ENCODE measurements at regions of chr9 and their contacts with region 1.

Region 1: GRCh38 chr9:33290247-33291030 is at the start of gene NFX1:
- DNase-seq: peak; percentile 98 to 99 (median 98)
- ATAC-seq: peak; percentile 91 to 96 (median 94)
- H3K4me3 ChIP-seq: peak within 1 kb of the TSS; percentile 56 to 94 (median 78)
- H3K27ac ChIP-seq: peak within 1 kb of the TSS; percentile 94 to 100 (median 98)
- H3K4me1 ChIP-seq: peaks cover 9 to 58% (median 34%) of the 10 kb centered on the region in 12 donors
- H3K27me3 ChIP-seq: no peaks in the 10 kb centered on the region
- CTCF ChIP-seq: no peak
- POLR2A ChIP-seq: peak; percentile 36 to 90
- total RNA-seq, gene NFX1: 25.4 to 42.0 (median 36.1) TPM

Region 2: DNA sequence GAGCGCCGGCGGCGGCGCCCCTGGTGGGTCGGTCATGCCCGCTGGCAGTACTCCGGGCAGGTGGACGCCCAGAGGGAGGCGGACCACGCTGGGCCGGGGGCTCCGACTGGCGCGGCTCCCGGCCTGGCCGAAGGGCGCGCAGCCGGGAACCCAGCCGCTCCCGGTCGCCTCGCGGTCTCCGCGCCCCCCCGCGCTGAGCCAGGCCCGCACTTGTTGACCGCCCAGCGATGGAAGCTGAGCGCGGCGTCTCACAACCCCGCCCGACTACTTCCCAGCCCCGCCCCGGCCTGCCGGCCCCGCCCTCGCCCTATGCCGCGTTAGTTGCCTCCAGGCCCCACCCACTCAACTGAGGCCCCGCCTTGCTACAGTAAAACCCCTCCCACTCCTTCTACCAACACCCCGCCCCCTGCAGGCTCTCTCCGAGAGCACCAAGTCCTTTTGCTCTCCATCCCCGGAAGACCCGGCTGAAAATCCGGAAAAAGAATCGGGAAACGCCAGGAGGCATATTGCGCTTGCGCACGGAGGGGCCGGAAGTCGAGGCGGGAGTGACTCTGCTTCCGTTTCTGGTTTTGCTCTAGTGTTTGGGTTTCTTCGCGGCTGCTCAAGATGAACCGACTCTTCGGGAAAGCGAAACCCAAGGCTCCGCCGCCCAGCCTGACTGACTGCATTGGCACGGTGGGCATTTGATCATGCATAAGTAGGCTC is 25.8 kb before region 1 on chr9 and contains the starts of genes BAG1 and CHMP5:
- intact Hi-C with region 1: loop called in 2 of 10 experiments (anchors 1 kb)
- DNase-seq: peak; percentile 99 to 100 (median 100)
- ATAC-seq: peak; percentile 97 to 99 (median 98)
- H3K4me3 ChIP-seq: peak within 1 kb of the TSS; percentile 66 to 97 (median 91)
- H3K27ac ChIP-seq: peak within 1 kb of the TSS; percentile 76 to 99 (median 94)
- H3K4me1 ChIP-seq: peaks cover 0 to 36% (median 23%) of the 10 kb centered on the region in 12 donors
- H3K27me3 ChIP-seq: no peaks in the 10 kb centered on the region
- CTCF ChIP-seq: peak; percentile 12 to 69 (median 33)
- POLR2A ChIP-seq: peak; percentile 90 to 91
- total RNA-seq, gene BAG1: 71.0 to 144 (median 112) TPM
- total RNA-seq, gene CHMP5: 37.6 to 58.5 (median 53.0) TPM

Region 3: DNA sequence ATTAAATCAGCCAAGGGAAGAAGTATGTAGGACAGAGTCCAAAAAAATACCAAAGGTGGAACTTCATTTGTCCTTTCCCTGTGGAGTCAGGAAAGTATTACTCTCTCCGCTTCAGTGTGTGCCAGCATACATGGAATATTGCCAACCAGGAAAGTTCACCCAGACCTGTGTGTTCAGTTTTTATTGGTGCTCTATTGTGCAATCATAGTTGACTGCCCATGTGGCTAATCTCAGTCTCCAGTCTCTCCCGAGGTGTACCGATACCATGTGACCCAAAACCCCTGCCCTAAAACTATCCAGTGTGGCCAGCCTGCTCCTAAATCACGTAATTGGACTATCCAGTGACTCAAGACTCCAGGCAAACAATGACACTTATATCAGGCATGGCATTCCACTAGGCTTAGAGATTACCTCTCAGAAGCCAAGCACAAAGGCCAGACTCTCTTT is 38.7 kb after region 1 on chr9:
- intact Hi-C with region 1: loop called in 2 of 10 experiments (anchors 1 to 5 kb)
- DNase-seq: peak in 4 of 5 donors; percentile 34 to 73 (median 46)
- ATAC-seq: peak; percentile 92 to 97 (median 94)
- H3K4me3 ChIP-seq: no peak overlapping the region
- H3K27ac ChIP-seq: peak overlapping the region; percentile 12 to 87 (median 72)
- H3K4me1 ChIP-seq: peaks cover 0 to 19% (median 6%) of the 10 kb centered on the region in 12 donors
- H3K27me3 ChIP-seq: no peaks in the 10 kb centered on the region
- CTCF ChIP-seq: no peak
- POLR2A ChIP-seq: no peak

Region 4: DNA sequence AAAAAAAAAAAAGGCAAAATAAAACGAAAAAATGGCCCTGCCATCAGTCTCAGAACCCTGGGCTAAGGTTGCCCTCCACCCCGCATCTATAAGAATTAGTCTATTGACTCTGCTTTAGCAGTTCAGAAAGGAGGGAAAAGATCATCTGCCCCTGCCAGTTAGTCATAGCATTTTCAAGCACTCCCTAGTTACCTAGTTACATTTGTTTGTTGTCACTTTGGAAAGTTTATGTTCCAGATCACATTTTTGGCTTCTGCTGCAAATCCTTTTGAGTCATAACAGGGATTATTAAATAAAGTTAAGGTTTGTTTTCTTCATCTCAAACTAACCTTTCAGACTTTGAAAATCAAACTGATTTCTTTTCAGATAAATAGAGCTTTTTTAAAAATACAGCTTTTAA is 59.9 kb after region 1 on chr9:
- intact Hi-C with region 1: loop called in 1 of 10 experiments (anchors 10 kb)
- DNase-seq: no peak
- ATAC-seq: peak in 3 of 4 donors; percentile 52 to 75 (median 71)
- H3K4me3 ChIP-seq: no peak overlapping the region
- H3K27ac ChIP-seq: peak overlapping the region in 7 of 12 donors; percentile 1 to 76 (median 41)
- H3K4me1 ChIP-seq: peaks cover 0 to 28% (median 11%) of the 10 kb centered on the region in 12 donors
- H3K27me3 ChIP-seq: no peaks in the 10 kb centered on the region
- CTCF ChIP-seq: no peak
- POLR2A ChIP-seq: no peak

Region 5: DNA sequence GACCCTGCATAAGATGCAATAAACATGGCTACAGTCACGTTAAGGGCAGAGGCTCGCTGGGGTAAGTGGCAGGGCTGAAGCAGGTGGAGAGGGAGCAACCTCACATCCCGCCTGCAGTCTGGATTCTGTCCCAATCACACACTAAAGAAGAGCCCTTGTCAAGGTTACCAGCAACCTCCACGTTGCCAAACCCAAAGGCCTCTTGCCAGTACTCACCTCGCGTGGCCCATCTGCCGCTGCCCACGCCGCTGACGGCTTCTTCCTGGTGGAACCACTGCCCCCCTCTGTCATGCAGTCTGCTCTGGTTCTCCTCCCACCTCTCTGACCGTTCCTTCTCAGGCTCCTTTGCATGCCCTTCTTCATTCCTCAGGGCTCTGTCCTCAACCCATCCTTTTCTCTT is 103.1 kb after region 1 on chr9:
- intact Hi-C with region 1: no loop called
- DNase-seq: peak in 3 of 5 donors; percentile 52 to 82 (median 66)
- ATAC-seq: no peak
- H3K4me3 ChIP-seq: peak overlapping the region in 3 of 12 donors; percentile 2 to 17 (median 15)
- H3K27ac ChIP-seq: peak overlapping the region; percentile 78 to 95 (median 90)
- H3K4me1 ChIP-seq: peaks cover 0 to 68% (median 28%) of the 10 kb centered on the region in 12 donors
- H3K27me3 ChIP-seq: no peaks in the 10 kb centered on the region
- CTCF ChIP-seq: no peak
- POLR2A ChIP-seq: no peak

Region 6: DNA sequence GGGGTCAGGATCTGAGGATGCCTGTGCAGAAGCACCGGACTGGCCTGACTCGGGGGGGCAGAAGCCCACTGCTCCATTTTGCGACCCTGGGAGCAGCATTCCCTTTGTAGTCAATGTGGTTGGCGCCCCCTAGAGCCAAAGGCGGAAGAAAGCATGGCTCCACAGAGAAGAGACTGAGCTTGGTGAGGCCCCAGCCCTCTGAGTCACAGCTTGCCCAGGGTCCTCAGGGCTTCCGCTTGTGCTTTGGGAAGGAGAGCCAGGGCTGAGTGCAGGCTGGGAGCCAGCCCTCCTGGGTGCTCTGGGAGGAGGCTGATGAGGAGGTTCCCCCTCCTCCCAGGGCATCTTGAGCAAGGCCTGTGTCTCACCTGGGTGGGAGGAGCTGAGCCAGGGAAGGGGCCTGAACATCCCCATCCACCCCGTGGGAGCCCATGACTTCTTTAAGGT is 162.4 kb after region 1 on chr9:
- intact Hi-C with region 1: loop called in 1 of 10 experiments (anchors 10 kb)
- DNase-seq: peak in 4 of 5 donors; percentile 37 to 72 (median 54)
- ATAC-seq: peak in 3 of 4 donors; percentile 62 to 69 (median 63)
- H3K4me3 ChIP-seq: no peak overlapping the region
- H3K27ac ChIP-seq: no peak overlapping the region
- H3K4me1 ChIP-seq: peaks cover 0 to 10% (median under 1%) of the 10 kb centered on the region in 12 donors
- H3K27me3 ChIP-seq: no peaks in the 10 kb centered on the region
- CTCF ChIP-seq: peak; percentile 38 to 65 (median 58)
- POLR2A ChIP-seq: no peak

Region 7: GRCh38 chr9:33466565-33467495 is 176.4 kb after region 1 on chr9:
- intact Hi-C with region 1: loop called in 3 of 10 experiments (anchors 5 to 10 kb)
- DNase-seq: peak; percentile 50 to 84 (median 57)
- ATAC-seq: peak; percentile 28 to 68 (median 46)
- H3K4me3 ChIP-seq: no peak overlapping the region
- H3K27ac ChIP-seq: no peak overlapping the region
- H3K4me1 ChIP-seq: peaks cover 0 to 6% (median 0%) of the 10 kb centered on the region in 12 donors
- H3K27me3 ChIP-seq: no peaks in the 10 kb centered on the region
- CTCF ChIP-seq: peak; percentile 84 to 95 (median 89)
- POLR2A ChIP-seq: no peak

Region 8: DNA sequence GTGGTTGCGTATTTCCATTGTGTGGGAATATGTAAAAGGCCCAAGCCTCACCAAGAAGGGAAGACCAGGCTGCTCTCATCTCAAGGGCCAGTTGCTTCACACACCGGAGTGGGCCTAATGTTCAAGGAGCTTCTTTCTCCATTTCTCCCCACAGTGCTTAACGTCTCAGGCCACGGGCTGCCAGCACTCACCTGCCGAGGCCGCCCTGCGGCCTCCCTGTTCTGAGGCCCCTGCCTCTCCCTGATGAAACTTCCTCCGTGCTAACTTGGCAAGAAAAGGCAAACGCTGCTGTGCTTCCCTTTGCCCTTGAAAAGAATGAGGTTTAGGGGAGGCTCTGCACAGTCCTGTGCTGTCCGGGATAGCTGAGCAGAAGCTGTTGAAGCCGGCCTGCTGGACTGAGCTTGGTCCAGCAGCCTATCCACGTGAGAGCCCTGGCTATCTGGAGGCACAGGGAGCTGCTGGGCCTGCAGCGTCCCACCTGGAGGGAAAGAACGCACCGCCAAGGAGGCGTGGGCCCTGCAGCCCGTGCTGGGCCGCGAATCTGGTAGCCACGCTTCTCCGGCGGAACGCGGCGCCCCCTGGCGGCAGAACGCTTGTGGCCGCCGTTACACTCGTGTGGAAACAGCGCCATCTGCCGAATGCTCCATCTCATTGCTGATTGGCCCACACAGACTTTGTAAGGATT is 431.4 kb after region 1 on chr9:
- intact Hi-C with region 1: loop called in 1 of 10 experiments (anchors 10 kb)
- DNase-seq: peak; percentile 76 to 91 (median 86)
- ATAC-seq: peak; percentile 51 to 87 (median 82)
- H3K4me3 ChIP-seq: no peak overlapping the region
- H3K27ac ChIP-seq: no peak overlapping the region
- H3K4me1 ChIP-seq: peaks cover 0 to 15% (median 0%) of the 10 kb centered on the region in 12 donors
- H3K27me3 ChIP-seq: peaks cover 0 to 5% (median 0%) of the 10 kb centered on the region in 9 donors
- CTCF ChIP-seq: peak; percentile 100
- POLR2A ChIP-seq: no peak